Panc1 (cell line): ENCODE measurements at regions of chr3 and their contacts with region 1.

Region 1: GRCh38 chr3:114566162-114566755 is 272.4 kb downstream of the TIGIT start:
- DNase-seq: no peak
- ATAC-seq: no peak
- H3K4me3 ChIP-seq: no peak overlapping the region
- H3K27ac ChIP-seq: no peak overlapping the region
- H3K4me1 ChIP-seq: no peaks in the 10 kb centered on the region
- H3K27me3 ChIP-seq: no peaks in the 10 kb centered on the region
- CTCF ChIP-seq: no peak

Region 2: GRCh38 chr3:114179575-114179974 is 386.7 kb before region 1 on chr3:
- CTCF ChIA-PET with region 1: no interaction called
- POLR2A ChIA-PET with region 1: no interaction called
- in situ Hi-C with region 1: no loop called
- intact Hi-C with region 1: no loop called
- DNase-seq: peak; percentile 5
- ATAC-seq: peak; percentile 76; the same call in 1 of the 2 replicates
- H3K4me3 ChIP-seq: no peak overlapping the region
- H3K27ac ChIP-seq: no peak overlapping the region
- H3K4me1 ChIP-seq: no peaks in the 10 kb centered on the region
- H3K27me3 ChIP-seq: peaks cover 4% of the 10 kb centered on the region; the same call in 1 of the 2 replicates
- CTCF ChIP-seq: peak; percentile 68

Region 3: GRCh38 chr3:114764056-114764492 is 197.8 kb after region 1 on chr3:
- CTCF ChIA-PET with region 1: no interaction called
- POLR2A ChIA-PET with region 1: no interaction called
- in situ Hi-C with region 1: no loop called
- intact Hi-C with region 1: no loop called
- DNase-seq: no peak
- ATAC-seq: no peak
- H3K4me3 ChIP-seq: no peak overlapping the region
- H3K27ac ChIP-seq: no peak overlapping the region
- H3K4me1 ChIP-seq: no peaks in the 10 kb centered on the region
- H3K27me3 ChIP-seq: no peaks in the 10 kb centered on the region
- CTCF ChIP-seq: no peak

Region 4: GRCh38 chr3:116188231-116188785 is 1622.0 kb after region 1 on chr3:
- CTCF ChIA-PET with region 1: no interaction called
- POLR2A ChIA-PET with region 1: interaction called, 10 read pairs
- in situ Hi-C with region 1: no loop called
- intact Hi-C with region 1: no loop called
- DNase-seq: no peak
- ATAC-seq: no peak
- H3K4me3 ChIP-seq: no peak overlapping the region
- H3K27ac ChIP-seq: no peak overlapping the region
- H3K4me1 ChIP-seq: no peaks in the 10 kb centered on the region
- H3K27me3 ChIP-seq: no peaks in the 10 kb centered on the region
- CTCF ChIP-seq: no peak